Endothelial cell of umbilical vein (primary cell): ENCODE measurements at regions of chr2 and their contacts with region 1.

Region 1: DNA sequence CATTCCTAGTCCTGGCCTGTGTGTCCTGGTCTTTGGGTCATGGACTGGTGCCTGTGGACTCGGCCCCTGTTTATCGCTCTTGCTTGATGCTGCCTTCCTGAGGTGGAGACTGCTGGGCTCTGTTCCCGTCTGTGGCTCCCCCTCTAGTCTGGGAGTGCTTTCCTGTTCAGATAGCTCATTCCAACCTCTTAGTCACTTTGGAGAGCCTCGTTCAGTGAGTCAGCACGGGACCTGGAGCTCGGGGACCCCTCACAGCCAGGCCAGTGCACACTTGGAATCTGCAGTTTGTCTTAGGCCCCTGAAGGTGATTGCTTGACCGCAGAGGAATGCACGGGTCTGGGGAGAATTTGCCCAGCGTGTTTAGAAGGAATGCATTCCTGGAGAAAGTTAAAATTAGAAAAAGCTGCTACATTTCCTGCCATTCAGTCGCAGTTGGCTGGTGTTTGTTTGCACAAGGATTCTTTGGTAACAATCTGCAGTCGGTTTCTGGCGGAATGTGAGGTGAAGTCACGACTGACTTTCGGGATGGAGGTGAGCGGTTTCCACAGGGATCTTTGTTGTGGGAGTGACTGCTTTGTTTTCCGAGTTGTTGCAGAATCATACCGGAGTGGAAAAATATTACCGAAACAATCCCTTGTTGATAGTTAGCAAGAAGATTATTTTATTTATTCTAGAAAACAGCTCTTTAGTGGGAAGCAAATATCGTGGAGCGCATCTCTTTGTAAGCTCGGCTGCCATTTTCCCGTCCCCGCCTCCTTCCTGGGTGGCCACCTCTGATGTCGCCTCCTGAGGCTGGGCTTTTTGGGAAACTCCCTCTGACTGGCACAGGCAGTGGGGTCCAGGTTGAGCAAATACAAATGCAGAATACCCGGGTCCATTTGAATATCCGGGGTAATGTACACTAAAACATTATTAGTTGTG is 29.6 kb downstream of the SH3BP4 start:
- DNase-seq: peak; percentile 99
- H3K4me3 ChIP-seq: peak overlapping the region in 2 of 3 experiments; percentile 37 to 53
- H3K27ac ChIP-seq: peak overlapping the region; percentile 97
- H3K4me1 ChIP-seq: peaks cover 76% of the 10 kb centered on the region
- H3K27me3 ChIP-seq: no peaks in the 10 kb centered on the region
- CTCF ChIP-seq: peak in 1 of 2 donors; percentile 4
- POLR2A ChIP-seq: peak; percentile 46

Region 2: GRCh38 chr2:234241656-234242458 is 739.6 kb before region 1 on chr2:
- CTCF ChIA-PET with region 1: no interaction called
- POLR2A ChIA-PET with region 1: no interaction called
- dilution Hi-C with region 1: no loop called
- intact Hi-C with region 1: loop called (anchors 1 kb)
- DNase-seq: peak; percentile 30
- H3K4me3 ChIP-seq: no peak overlapping the region
- H3K27ac ChIP-seq: no peak overlapping the region
- H3K4me1 ChIP-seq: peaks cover 32% of the 10 kb centered on the region
- H3K27me3 ChIP-seq: no peaks in the 10 kb centered on the region
- CTCF ChIP-seq: no peak
- POLR2A ChIP-seq: no peak

Region 3: DNA sequence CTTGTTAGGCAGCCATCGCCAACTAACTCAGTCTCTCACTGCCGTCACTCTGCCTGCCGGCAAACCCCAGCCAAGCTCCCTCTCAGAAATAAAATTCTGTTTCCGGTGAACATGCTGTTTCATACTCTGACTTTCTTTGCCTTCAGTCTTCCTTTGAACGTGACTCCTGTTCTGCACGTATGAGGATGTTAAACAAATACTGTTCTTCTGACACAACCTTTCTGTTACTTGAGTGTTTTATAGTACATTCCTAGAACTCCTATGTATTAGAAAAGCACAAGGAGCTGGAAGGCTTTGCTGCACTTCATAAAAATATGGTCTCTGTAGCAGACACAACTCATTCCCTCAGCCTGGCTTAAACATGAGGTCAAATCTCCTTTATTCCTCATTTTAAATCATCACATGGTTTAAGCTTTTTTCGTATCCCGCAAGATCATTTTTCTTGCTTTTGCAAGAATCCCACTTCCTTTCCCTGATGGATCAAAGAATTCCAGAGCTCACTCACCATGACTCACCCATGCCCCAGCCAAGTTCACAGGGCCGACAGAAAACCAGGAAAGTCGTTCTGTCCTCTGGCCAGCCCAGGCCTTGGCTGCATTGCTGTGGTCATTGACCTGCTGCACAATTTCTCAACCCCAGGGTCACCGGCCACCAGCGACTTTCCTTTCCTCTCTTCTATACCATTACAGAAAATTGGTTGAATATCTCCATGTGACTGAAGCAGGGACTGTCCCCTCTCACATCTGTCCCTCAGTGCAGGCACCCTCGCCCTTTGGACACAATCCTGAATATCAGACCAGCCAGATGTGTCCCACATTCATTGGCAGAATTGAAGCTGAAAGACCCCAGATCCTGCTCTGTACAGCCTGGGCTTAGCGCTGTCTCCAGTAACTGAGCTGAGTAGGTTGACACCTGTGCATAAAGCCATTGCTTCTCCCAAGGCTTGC is 301.4 kb before region 1 on chr2:
- CTCF ChIA-PET with region 1: no interaction called
- POLR2A ChIA-PET with region 1: no interaction called
- dilution Hi-C with region 1: no loop called
- intact Hi-C with region 1: loop called (anchors 1 kb)
- DNase-seq: peak; percentile 93
- H3K4me3 ChIP-seq: no peak overlapping the region
- H3K27ac ChIP-seq: peak overlapping the region; percentile 69
- H3K4me1 ChIP-seq: peaks cover 20% of the 10 kb centered on the region
- H3K27me3 ChIP-seq: no peaks in the 10 kb centered on the region
- CTCF ChIP-seq: no peak
- POLR2A ChIP-seq: no peak

Region 4: GRCh38 chr2:234792621-234793022 is 188.8 kb before region 1 on chr2:
- CTCF ChIA-PET with region 1: no interaction called
- POLR2A ChIA-PET with region 1: no interaction called
- dilution Hi-C with region 1: no loop called
- intact Hi-C with region 1: no loop called
- DNase-seq: no peak
- H3K4me3 ChIP-seq: no peak overlapping the region
- H3K27ac ChIP-seq: no peak overlapping the region
- H3K4me1 ChIP-seq: no peaks in the 10 kb centered on the region
- H3K27me3 ChIP-seq: peaks cover 9 to 17% of the 10 kb centered on the region in 2 experiments
- CTCF ChIP-seq: no peak
- POLR2A ChIP-seq: no peak

Region 5: GRCh38 chr2:234840336-234840735 is 141.1 kb before region 1 on chr2:
- CTCF ChIA-PET with region 1: no interaction called
- POLR2A ChIA-PET with region 1: no interaction called
- dilution Hi-C with region 1: no loop called
- intact Hi-C with region 1: loop called (anchors 1 kb)
- DNase-seq: peak; percentile 95
- H3K4me3 ChIP-seq: no peak overlapping the region
- H3K27ac ChIP-seq: peak overlapping the region; percentile 62
- H3K4me1 ChIP-seq: peaks cover 19% of the 10 kb centered on the region
- H3K27me3 ChIP-seq: no peaks in the 10 kb centered on the region
- CTCF ChIP-seq: no peak
- POLR2A ChIP-seq: no peak

Region 6: DNA sequence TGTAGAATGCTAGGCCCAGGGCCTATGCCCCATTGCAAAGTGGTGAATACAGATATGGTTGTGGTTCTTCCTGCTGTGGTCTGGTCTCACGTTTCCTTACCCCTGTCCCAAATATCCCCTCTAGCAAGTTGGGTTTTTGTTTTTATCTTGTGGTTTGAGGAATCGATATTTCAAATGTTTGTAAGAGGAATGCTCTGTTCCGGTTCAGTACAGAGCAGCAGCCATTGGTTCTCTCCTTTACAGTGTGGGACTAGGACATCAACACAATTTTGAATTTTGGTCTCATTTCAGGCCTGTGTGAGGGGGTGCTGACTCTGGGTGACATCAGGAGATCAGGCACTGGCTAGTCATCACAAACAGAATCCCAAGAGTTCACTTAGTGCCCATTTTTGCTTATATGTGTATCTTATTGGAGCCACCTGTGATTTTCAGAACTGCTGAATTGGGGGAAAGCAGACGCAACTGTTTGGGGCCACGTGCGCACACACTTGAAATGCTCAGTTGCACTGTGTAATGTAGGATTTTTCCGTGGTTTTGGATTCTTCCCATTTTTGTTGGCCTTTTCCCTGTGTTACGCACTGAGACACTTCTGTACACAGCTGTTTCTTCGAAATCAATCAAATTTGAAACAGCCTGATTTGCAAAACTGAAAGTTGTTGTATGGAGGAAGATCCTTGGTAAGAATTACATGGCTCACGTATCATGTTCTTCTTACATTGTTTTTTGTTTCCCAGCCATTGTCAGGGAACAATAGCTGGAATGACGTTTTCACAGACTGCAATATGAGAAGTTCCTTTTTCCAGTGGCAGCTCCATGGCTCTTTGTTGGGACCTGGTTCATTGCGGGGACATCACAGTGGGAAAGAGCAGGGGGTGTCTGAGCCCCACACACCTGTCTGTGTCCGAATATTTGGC is 21.0 kb before region 1 on chr2:
- CTCF ChIA-PET with region 1: interaction called, 11 read pairs
- POLR2A ChIA-PET with region 1: no interaction called
- dilution Hi-C with region 1: no loop called
- intact Hi-C with region 1: loop called (anchors 1 kb)
- DNase-seq: peak; percentile 87
- H3K4me3 ChIP-seq: no peak overlapping the region
- H3K27ac ChIP-seq: peak overlapping the region; percentile 87
- H3K4me1 ChIP-seq: peaks cover 23% of the 10 kb centered on the region
- H3K27me3 ChIP-seq: no peaks in the 10 kb centered on the region
- CTCF ChIP-seq: no peak
- POLR2A ChIP-seq: no peak

Region 7: GRCh38 chr2:235026649-235027557 is 45.4 kb after region 1 on chr2:
- CTCF ChIA-PET with region 1: interaction called, 18 read pairs
- POLR2A ChIA-PET with region 1: interaction called, 4 read pairs
- dilution Hi-C with region 1: no loop called
- intact Hi-C with region 1: loop called (anchors 1 kb)
- DNase-seq: peak; percentile 21
- H3K4me3 ChIP-seq: no peak overlapping the region
- H3K27ac ChIP-seq: peak overlapping the region; percentile 76
- H3K4me1 ChIP-seq: peaks cover 60% of the 10 kb centered on the region
- H3K27me3 ChIP-seq: no peaks in the 10 kb centered on the region
- CTCF ChIP-seq: no peak
- POLR2A ChIP-seq: no peak

Region 8: DNA sequence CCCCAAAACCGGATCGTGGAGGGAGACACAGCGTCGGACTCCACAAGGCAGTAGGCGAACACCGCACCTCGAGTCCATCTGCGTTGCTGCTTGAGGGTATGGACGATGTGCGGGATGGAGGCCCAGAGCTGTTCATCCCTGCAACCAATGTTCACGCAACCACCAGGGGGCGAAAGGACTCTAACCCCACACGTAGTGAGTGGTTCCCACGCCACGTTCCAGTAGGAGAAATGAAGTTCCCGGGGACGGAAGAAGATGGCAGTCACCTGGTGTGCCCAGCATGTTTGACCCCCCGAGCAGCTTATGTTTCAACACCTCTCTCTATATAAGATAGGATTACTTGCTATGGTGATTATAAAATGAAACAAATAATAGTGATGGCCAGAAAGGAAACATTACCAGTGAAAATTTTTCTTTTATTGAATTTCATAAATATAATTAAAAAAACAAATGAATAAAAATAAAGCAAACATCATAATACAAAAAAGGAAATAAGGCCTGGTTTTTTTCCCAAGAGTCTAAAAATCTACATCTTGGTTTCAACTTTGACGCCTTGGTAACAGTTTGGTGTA is 154.6 kb after region 1 on chr2:
- CTCF ChIA-PET with region 1: no interaction called
- POLR2A ChIA-PET with region 1: no interaction called
- dilution Hi-C with region 1: no loop called
- intact Hi-C with region 1: no loop called
- DNase-seq: peak; percentile 63
- H3K4me3 ChIP-seq: no peak overlapping the region
- H3K27ac ChIP-seq: no peak overlapping the region
- H3K4me1 ChIP-seq: peaks cover 2% of the 10 kb centered on the region
- H3K27me3 ChIP-seq: peaks cover 2 to 6% of the 10 kb centered on the region in 2 experiments
- CTCF ChIP-seq: peak; percentile 66 to 79
- POLR2A ChIP-seq: no peak

Region 9: GRCh38 chr2:235685024-235685721 is 703.7 kb after region 1 on chr2:
- CTCF ChIA-PET with region 1: no interaction called
- POLR2A ChIA-PET with region 1: no interaction called
- dilution Hi-C with region 1: no loop called
- intact Hi-C with region 1: no loop called
- DNase-seq: no peak
- H3K4me3 ChIP-seq: no peak overlapping the region
- H3K27ac ChIP-seq: no peak overlapping the region
- H3K4me1 ChIP-seq: no peaks in the 10 kb centered on the region
- H3K27me3 ChIP-seq: no peaks in the 10 kb centered on the region
- CTCF ChIP-seq: no peak
- POLR2A ChIP-seq: no peak

Region 10: DNA sequence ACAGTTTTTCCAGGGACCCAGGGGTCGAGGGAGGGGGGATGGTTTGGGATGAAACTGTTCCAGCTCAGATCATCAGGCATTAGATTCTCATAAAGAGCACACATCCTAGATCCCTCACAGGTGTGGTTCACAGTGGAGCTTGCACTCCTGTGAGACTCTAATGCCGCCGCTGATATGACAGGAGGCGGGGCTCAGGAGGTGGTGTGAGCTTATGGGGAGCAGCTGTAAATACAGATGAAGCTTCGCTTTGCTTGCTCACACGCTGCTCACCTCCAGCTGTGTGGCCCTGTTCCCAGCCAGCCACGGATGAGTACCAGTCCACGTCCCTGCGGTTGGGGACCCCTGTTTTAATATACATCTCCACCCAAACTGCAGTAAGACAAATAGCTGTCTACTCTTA is 716.6 kb after region 1 on chr2:
- CTCF ChIA-PET with region 1: no interaction called
- POLR2A ChIA-PET with region 1: no interaction called
- dilution Hi-C with region 1: no loop called
- intact Hi-C with region 1: no loop called
- DNase-seq: no peak
- H3K4me3 ChIP-seq: no peak overlapping the region
- H3K27ac ChIP-seq: no peak overlapping the region
- H3K4me1 ChIP-seq: no peaks in the 10 kb centered on the region
- H3K27me3 ChIP-seq: no peaks in the 10 kb centered on the region
- CTCF ChIP-seq: no peak
- POLR2A ChIP-seq: no peak